ENCODE measurements at regions of chr11 and their contacts with region 1.

Region 1: DNA sequence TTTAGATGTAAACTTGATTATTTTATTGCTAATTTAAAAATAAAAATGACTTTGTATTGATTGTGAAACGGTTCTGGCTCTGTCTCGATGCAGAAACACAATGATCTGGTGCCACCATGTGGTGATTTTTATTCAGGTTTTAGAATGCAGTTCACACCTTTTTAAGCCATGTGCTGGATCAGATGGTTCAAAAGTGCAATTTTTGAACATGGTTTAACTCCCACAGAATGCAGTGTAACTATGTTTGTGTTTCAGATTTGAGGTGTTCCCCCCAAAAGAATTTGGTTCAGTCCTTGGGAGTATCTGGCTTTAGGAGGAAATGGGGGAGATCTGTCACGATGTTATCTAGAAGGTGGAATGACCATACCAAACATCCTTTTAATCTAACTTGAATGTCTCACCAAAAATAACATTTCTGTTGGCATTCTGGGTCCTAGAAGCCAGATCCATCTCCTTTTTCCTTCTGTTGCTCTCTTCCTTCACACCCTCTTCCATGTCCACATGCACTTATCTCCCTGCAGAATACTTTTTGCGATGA is 7.9 kb downstream of the MRPL16 start:
- DNase-seq: peak; percentile 46
- ATAC-seq: peak; percentile 67
- H3K4me3 ChIP-seq: no peak overlapping the region
- H3K27ac ChIP-seq: no peak overlapping the region
- H3K4me1 ChIP-seq: peaks cover 0 to 7% of the 10 kb centered on the region in 2 experiments; a peak in 1 of 4 replicates
- H3K27me3 ChIP-seq: no peaks in the 10 kb centered on the region
- CTCF ChIP-seq: peak; percentile 41 to 95 (median 66); a peak in 5 of 6 replicates
- POLR2A ChIP-seq: no peak
- RAD21 ChIP-seq: peak; percentile 94

Region 2: DNA sequence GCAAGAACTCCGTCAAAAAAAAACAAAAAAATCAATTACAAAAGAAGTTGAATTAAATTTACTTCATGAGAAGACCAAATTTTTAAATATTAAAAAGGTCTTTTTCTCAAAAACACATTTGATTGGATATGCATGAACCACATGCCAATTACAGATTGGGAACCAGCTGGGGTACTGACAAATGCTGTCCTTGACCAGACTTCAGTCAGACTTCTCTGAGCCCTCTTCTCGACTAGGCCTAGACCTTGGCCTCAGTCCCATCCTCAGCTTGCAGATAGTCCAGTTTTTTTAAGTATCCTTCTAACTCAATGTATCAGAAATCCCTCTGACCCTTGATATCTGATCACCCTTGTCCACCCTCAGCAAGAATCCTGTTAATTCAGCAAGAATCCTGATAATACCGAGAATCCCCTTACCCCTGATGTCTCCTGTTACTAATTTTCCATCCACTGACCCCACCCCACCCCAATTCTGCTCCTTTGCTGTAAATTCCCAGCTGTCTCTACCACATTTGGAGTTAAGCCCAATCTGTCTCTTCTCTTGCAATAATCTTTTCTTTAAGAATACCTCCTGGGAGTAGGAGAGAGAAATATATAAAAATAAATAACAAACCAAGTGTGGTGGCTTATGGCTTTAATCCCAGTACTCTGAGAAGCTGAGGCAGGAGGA is 260.4 kb before region 1 on chr11:
- CTCF ChIA-PET with region 1: no interaction called
- POLR2A ChIA-PET with region 1: no interaction called
- RAD21 ChIA-PET with region 1: no interaction called
- intact Hi-C with region 1: loop called (anchors 1 kb)
- DNase-seq: no peak
- ATAC-seq: no peak
- H3K4me3 ChIP-seq: no peak overlapping the region
- H3K27ac ChIP-seq: no peak overlapping the region
- H3K4me1 ChIP-seq: peaks cover 24 to 43% of the 10 kb centered on the region in 2 experiments
- H3K27me3 ChIP-seq: no peaks in the 10 kb centered on the region
- CTCF ChIP-seq: no peak
- POLR2A ChIP-seq: no peak
- RAD21 ChIP-seq: no peak